CD8-positive, alpha-beta T cell (primary cell): ENCODE measurements at regions of chr15 and their contacts with region 1.

Region 1: DNA sequence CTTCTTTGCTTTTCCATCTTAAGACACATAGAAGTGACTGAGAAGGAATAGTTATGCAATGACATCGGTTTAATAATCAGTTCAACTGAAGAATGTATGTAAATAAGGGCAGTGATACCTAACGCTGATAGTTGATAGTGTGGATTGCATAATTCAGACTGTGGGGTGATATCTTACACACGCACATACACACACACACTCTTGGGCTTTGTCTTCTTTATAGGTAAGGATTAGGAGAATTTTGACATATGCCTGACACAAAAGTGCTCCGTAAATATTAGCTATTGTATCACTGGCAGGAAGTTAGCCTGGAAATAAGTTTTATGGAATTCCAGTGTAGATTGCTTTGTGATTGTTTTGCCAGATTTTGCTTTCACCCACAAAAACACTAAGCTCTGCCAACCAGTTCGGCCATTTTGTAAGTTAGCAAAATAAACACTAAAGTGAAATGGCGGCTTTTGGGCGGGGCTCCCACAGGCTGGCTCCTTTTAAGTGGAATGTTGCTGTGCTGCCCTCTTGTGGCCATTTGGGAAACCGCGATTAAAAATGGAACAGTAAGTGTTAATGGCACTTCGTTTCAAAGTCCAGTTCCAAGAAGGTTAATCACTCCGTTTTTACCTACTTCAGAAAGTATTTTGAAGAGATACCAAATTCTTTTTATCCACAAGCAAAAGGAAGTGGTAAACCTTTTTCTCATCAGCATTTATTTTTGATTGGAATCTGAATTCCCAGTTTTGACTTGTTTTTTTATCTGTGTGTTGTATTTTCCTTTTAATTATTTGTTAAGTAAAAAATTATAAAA is 17.7 kb downstream of the CHD2 start:
- DNase-seq: peak; percentile 85 to 94 (median 91)
- ATAC-seq: peak; percentile 17
- H3K4me3 ChIP-seq: no peak overlapping the region
- H3K4me3 Mint-ChIP-seq: peak overlapping the region; percentile 56
- H3K27ac ChIP-seq: peak overlapping the region; percentile 22 to 96
- H3K27ac Mint-ChIP-seq: peak overlapping the region; percentile 94
- H3K4me1 ChIP-seq: peaks cover 76% of the 10 kb centered on the region
- H3K4me1 Mint-ChIP-seq: peaks cover 86% of the 10 kb centered on the region
- H3K27me3 ChIP-seq: no peaks in the 10 kb centered on the region
- H3K27me3 Mint-ChIP-seq: no peaks in the 10 kb centered on the region
- CTCF ChIP-seq: peak; percentile 95

Region 2: DNA sequence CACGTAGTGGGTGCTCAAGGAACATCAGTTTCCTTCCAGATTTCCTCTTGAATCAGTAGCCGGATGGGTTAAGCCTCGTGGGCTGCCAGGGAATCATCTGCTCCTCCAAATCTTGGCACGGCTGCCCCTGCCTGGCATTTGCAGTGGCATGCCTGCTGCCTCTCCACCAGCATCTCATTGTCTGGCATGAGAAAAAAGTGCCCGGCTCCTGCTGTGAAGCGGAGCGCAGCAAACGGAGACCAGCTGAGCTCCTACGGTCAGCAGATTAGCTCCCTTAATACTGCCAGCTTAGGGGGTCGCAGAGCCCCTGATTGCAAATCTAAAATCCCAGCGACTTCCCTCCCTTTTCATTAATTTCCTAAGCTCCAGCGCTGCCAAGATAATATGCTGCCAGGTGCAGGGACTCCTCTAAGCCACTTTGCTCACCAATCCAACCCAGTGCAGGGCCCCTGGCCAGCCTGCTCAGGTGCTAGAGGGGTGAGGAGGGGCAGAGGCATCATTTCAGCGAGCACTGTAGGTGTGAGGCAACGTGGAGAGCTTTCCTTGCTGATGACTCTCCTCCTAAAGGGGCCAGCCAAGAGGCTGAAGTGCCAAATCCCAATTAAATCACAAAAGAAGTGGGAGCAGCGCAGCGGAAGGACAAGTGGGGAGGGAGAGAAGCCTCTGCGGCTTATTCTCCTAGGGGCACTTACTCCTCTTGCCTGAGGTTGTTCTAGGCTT is 573.7 kb before region 1 on chr15:
- CTCF ChIA-PET with region 1: no interaction called
- POLR2A ChIA-PET with region 1: no interaction called
- intact Hi-C with region 1: no loop called
- DNase-seq: no peak
- ATAC-seq: no peak
- H3K4me3 ChIP-seq: no peak overlapping the region
- H3K4me3 Mint-ChIP-seq: no peak overlapping the region
- H3K27ac ChIP-seq: no peak overlapping the region
- H3K27ac Mint-ChIP-seq: no peak overlapping the region
- H3K4me1 ChIP-seq: no peaks in the 10 kb centered on the region
- H3K4me1 Mint-ChIP-seq: no peaks in the 10 kb centered on the region
- H3K27me3 ChIP-seq: no peaks in the 10 kb centered on the region
- H3K27me3 Mint-ChIP-seq: peaks cover 18% of the 10 kb centered on the region
- CTCF ChIP-seq: no peak

Region 3: GRCh38 chr15:92803847-92804609 is 113.8 kb before region 1 on chr15:
- CTCF ChIA-PET with region 1: interaction called, 153 read pairs
- POLR2A ChIA-PET with region 1: interaction called, 104 read pairs
- intact Hi-C with region 1: loop called (anchors 1 kb)
- DNase-seq: peak in 2 of 9 experiments; percentile 31 to 48
- ATAC-seq: no peak
- H3K4me3 ChIP-seq: no peak overlapping the region
- H3K4me3 Mint-ChIP-seq: no peak overlapping the region
- H3K27ac ChIP-seq: no peak overlapping the region
- H3K27ac Mint-ChIP-seq: no peak overlapping the region
- H3K4me1 ChIP-seq: peaks cover 8% of the 10 kb centered on the region
- H3K4me1 Mint-ChIP-seq: peaks cover 10% of the 10 kb centered on the region
- H3K27me3 ChIP-seq: no peaks in the 10 kb centered on the region
- H3K27me3 Mint-ChIP-seq: no peaks in the 10 kb centered on the region
- CTCF ChIP-seq: no peak

Region 4: GRCh38 chr15:92831655-92832328 is 86.0 kb before region 1 on chr15:
- CTCF ChIA-PET with region 1: interaction called, 11 read pairs
- POLR2A ChIA-PET with region 1: interaction called, 20 read pairs
- intact Hi-C with region 1: no loop called
- DNase-seq: peak; percentile 72 to 96 (median 90)
- ATAC-seq: peak; percentile 93
- H3K4me3 ChIP-seq: peak overlapping the region; percentile 15 to 41
- H3K4me3 Mint-ChIP-seq: peak overlapping the region; percentile 72
- H3K27ac ChIP-seq: peak overlapping the region; percentile 67 to 80
- H3K27ac Mint-ChIP-seq: peak overlapping the region; percentile 96
- H3K4me1 ChIP-seq: peaks cover 42% of the 10 kb centered on the region
- H3K4me1 Mint-ChIP-seq: peaks cover 44% of the 10 kb centered on the region
- H3K27me3 ChIP-seq: no peaks in the 10 kb centered on the region
- H3K27me3 Mint-ChIP-seq: no peaks in the 10 kb centered on the region
- CTCF ChIP-seq: no peak

Region 5: GRCh38 chr15:92903941-92904831 is 13.6 kb before region 1 on chr15:
- CTCF ChIA-PET with region 1: interaction called, 46 read pairs
- POLR2A ChIA-PET with region 1: interaction called, 45 read pairs
- intact Hi-C with region 1: loop called (anchors 1 kb)
- DNase-seq: peak; percentile 98 to 99 (median 99)
- ATAC-seq: peak; percentile 77
- H3K4me3 ChIP-seq: peak overlapping the region; percentile 75 to 88
- H3K4me3 Mint-ChIP-seq: peak overlapping the region; percentile 94
- H3K27ac ChIP-seq: peak overlapping the region; percentile 95 to 99
- H3K27ac Mint-ChIP-seq: peak overlapping the region; percentile 99
- H3K4me1 ChIP-seq: peaks cover 60% of the 10 kb centered on the region
- H3K4me1 Mint-ChIP-seq: peaks cover 58% of the 10 kb centered on the region
- H3K27me3 ChIP-seq: no peaks in the 10 kb centered on the region
- H3K27me3 Mint-ChIP-seq: no peaks in the 10 kb centered on the region
- CTCF ChIP-seq: no peak

Region 6: DNA sequence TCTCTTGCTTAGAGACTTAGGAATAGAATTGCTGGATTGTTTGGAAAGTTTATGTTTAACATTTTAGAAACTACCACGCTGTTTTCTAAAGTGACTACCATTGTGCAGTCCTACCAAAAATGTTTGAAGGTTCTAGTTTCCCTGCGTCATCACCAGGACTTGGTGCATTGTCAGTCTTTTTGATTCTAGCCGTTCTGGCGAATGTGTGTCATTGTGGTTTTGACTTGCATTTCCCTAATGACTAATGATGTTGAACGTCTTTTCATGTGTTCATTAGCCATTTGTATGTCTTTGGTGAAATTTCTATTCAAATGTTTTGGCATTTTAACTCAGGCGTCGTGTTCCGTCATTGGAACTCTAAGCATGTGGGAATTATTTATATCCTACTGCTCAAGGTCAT is 40.3 kb after region 1 on chr15:
- CTCF ChIA-PET with region 1: no interaction called
- POLR2A ChIA-PET with region 1: no interaction called
- intact Hi-C with region 1: loop called in 1 of 2 experiments (anchors 5 kb)
- DNase-seq: peak in 6 of 9 experiments; percentile 25 to 76 (median 50)
- ATAC-seq: peak; percentile 90
- H3K4me3 ChIP-seq: no peak overlapping the region
- H3K4me3 Mint-ChIP-seq: peak overlapping the region; percentile 4
- H3K27ac ChIP-seq: peak overlapping the region in 1 of 2 experiments; percentile 27
- H3K27ac Mint-ChIP-seq: peak overlapping the region; percentile 89
- H3K4me1 ChIP-seq: peaks cover 5% of the 10 kb centered on the region
- H3K4me1 Mint-ChIP-seq: peaks cover 50% of the 10 kb centered on the region
- H3K27me3 ChIP-seq: no peaks in the 10 kb centered on the region
- H3K27me3 Mint-ChIP-seq: no peaks in the 10 kb centered on the region
- CTCF ChIP-seq: no peak